HEK293T (cell line): ENCODE measurements at regions of chr4 and their contacts with region 1.

Region 1: GRCh38 chr4:183602557-183603027 is 56.4 kb downstream of the RWDD4 start:
- DNase-seq: no peak

Region 2: GRCh38 chr4:183504064-183504929 is 98.3 kb before region 1 on chr4:
- CTCF ChIA-PET with region 1: no interaction called
- POLR2A ChIA-PET with region 1: interaction called, 10 read pairs
- DNase-seq: peak; percentile 78

Region 3: DNA sequence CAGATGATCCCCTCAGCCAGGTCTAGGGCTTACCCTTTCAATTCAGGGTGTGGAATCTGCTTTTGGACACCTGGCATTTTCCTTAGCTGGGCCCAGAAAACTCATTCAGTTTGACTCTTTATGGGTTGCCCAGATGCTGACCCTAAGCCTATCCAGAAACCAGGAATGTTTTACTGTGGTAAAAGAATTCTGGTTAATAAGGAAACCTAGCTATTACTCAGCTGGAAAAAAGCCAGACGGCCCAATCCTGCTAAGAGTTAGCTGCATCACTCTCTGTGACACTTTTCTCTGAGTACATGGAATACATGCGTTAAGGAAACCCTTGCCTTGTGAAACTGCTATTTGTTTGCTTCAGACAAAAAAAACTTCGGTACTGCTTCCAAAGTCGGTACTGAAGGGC is 69.8 kb before region 1 on chr4:
- CTCF ChIA-PET with region 1: interaction called, 12 read pairs
- POLR2A ChIA-PET with region 1: no interaction called
- DNase-seq: no peak

Region 4: GRCh38 chr4:185165605-185166063 is 1563.0 kb after region 1 on chr4:
- CTCF ChIA-PET with region 1: no interaction called
- POLR2A ChIA-PET with region 1: no interaction called
- DNase-seq: no peak